ENCODE measurements at regions of chr6 and their contacts with region 1.

Region 1: DNA sequence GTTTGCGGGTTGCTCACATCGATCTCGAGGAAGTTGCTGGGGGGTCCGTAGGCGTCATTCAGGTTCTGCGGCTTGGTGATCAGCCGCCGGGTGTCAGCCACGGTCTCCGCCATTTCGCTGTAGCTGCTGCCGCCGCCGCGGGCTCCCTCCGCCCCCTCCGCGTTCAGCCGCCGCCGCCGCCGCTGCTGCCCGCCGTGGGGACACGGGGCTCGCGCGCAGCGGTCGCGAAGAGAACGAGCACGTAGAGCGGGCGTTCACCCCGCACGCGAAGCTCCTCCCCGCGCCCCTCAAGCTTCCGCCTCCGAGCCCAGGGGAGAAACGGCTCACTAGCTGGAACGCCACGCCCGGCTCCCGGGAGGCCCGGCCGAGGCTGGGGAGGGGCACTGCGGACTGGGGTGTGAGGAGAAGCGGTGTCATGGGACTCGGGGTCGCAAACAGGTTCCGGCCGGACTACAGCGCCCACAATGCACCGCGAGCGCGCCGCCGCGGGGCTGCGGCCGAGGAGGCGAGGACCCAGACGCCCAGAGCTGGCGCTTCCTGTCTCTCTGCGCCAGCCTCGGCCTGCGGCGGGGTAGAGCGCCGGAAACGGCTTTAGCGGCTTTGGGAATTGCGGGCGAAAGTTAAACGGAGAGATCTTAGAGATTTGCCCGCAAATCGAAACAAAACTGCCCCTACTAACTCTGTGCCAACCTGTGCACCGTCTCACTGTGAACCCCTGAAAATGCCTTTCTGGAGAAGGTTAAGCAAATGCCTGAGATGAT is at the start of gene SNX3:
- DNase-seq: peak; percentile 91
- ATAC-seq: peak; percentile 90
- H3K4me3 ChIP-seq: peak within 1 kb of the TSS; percentile 89
- H3K27ac ChIP-seq: peak within 1 kb of the TSS; percentile 72
- H3K4me1 ChIP-seq: peaks cover 6% of the 10 kb centered on the region; the same call in 1 of the 2 replicates
- H3K27me3 ChIP-seq: no peaks in the 10 kb centered on the region
- CTCF ChIP-seq: no peak
- total RNA-seq, gene SNX3: 92.7 and 110 TPM in 2 replicates

Region 2: DNA sequence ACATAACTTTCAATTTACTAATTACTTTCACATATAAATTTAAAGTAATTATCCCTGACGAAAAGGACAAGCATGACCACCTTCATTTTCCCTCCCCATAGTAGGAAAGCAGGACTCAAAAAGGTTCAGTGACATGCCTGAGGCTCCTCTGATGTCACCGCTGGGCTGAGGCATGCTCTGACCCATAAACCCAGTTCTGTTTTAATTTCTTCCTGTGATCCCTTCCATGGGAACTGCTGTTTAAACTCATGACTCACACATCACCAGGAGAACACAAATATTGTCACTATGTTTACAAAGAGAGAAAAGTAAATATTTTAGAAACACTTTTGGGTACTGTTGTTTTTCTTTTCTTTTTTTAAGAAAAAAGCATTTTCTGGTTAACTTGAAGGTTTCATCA is 133.2 kb before region 1 on chr6:
- CTCF ChIA-PET with region 1: no interaction called
- POLR2A ChIA-PET with region 1: interaction called, 4 read pairs
- intact Hi-C with region 1: loop called (anchors 5 kb)
- DNase-seq: peak; percentile 87
- ATAC-seq: peak; percentile 98
- H3K4me3 ChIP-seq: no peak overlapping the region
- H3K27ac ChIP-seq: peak overlapping the region; percentile 83
- H3K4me1 ChIP-seq: peaks cover 33% of the 10 kb centered on the region
- H3K27me3 ChIP-seq: no peaks in the 10 kb centered on the region
- CTCF ChIP-seq: no peak

Region 3: DNA sequence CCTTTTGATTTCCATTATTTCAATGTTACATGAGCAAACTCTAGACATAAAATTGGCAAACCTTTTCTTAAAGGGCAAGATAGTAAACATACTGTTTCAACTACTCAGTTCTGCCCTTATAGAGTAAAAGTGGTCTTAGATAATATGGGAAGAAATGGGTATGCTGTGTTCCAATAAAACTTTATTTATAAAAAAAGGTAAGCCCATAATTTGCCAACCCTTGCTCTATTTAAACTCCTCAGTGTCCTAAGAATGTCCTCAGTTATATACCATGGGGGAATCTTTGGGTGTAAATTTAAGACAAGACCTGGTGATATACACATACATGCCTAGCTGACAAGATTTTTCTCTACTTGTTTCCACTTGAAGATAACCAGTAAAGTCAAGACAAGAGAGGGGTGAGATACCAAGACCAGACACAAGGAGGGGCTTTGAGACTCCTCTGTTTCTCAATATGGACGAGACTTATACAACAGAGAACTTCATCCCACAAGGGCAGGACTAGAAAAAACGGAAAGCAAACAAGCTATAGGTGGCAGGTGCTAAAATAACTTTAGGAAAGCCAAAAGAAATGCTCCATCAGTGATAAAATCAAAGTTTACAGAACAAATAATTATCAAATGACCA is 10.6 kb before region 1 on chr6:
- CTCF ChIA-PET with region 1: no interaction called
- POLR2A ChIA-PET with region 1: interaction called, 14 read pairs
- intact Hi-C with region 1: no loop called
- DNase-seq: peak; percentile 21
- ATAC-seq: no peak
- H3K4me3 ChIP-seq: no peak overlapping the region
- H3K27ac ChIP-seq: no peak overlapping the region
- H3K4me1 ChIP-seq: no peaks in the 10 kb centered on the region
- H3K27me3 ChIP-seq: no peaks in the 10 kb centered on the region
- CTCF ChIP-seq: peak; percentile 44

Region 4: DNA sequence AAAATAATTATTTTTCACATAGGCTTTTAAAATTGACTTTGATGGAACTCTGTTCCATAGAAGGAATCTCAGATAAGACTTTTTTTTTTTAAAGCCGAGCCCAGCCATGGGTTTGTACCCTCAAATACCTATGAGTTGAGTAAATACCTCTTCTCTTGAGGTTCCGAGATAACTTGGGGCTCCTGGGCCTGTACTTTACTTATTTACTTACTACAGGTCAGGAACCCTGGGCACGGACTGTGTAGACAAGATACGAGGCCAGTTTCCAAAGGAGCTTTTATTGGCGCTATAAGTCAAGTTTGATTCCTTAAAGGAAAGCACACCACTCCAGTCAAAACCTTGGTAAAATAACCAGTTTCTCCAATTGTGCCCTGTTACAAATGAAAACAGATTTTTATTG is 41.4 kb after region 1 on chr6:
- CTCF ChIA-PET with region 1: no interaction called
- POLR2A ChIA-PET with region 1: no interaction called
- intact Hi-C with region 1: no loop called
- DNase-seq: no peak
- ATAC-seq: no peak
- H3K4me3 ChIP-seq: no peak overlapping the region
- H3K27ac ChIP-seq: no peak overlapping the region
- H3K4me1 ChIP-seq: no peaks in the 10 kb centered on the region
- H3K27me3 ChIP-seq: no peaks in the 10 kb centered on the region
- CTCF ChIP-seq: no peak